ENCODE measurements at regions of chr17 and their contacts with region 1.

Region 1: DNA sequence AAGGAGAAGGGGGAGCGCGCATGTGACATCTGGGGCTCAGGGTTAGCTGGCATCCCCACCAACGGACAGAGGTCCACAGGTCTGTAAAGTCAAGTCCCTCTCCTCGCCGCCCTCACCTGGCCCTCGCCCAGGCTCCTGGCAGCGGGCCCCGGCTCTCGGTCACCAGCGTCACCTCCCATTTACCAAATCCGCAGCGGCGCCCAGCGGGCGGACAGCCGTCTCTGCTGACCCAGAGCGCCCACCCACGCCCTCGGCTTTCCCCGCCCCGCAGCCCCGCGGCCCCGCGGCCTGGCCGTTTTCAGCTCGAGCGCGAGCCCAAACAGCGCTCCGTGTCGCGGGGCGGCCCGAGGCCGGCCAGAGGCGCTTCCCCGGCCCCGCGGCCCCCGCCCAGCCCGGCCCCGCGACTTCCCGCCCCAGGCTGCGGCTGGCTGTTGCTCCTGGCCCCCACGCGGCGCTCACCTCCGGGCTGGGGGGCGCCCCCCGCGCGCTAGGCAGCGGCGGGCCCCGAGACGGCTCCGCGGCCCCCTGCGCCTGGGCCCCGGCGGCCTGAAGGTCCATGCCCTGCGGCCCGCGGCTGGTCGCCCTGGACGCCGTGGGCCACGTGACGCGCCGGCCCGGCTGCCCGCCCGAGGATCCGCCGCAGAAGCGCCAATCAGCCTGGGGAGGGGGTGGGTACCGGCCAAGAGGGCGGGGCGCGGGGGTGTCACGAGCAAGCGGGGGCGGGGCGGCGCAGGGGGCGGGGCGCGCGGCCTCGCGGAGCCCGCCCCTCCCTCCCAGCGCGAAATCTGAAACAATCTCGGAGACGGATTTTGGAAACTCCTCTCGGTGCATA is at the start of gene COPRS:
- DNase-seq: peak; percentile 19
- H3K4me3 ChIP-seq: peak within 1 kb of the TSS; percentile 65 to 78 (median 66)
- H3K27ac ChIP-seq: peak within 1 kb of the TSS; percentile 48
- H3K4me1 ChIP-seq: peaks cover 13% of the 10 kb centered on the region
- H3K27me3 ChIP-seq: no peaks in the 10 kb centered on the region
- CTCF ChIP-seq: peak in 2 of 3 experiments; percentile 10 to 23
- polyA plus RNA-seq, gene COPRS: 19.2 to 41.3 TPM (median 30.3 TPM) in 3 replicates

Region 2: DNA sequence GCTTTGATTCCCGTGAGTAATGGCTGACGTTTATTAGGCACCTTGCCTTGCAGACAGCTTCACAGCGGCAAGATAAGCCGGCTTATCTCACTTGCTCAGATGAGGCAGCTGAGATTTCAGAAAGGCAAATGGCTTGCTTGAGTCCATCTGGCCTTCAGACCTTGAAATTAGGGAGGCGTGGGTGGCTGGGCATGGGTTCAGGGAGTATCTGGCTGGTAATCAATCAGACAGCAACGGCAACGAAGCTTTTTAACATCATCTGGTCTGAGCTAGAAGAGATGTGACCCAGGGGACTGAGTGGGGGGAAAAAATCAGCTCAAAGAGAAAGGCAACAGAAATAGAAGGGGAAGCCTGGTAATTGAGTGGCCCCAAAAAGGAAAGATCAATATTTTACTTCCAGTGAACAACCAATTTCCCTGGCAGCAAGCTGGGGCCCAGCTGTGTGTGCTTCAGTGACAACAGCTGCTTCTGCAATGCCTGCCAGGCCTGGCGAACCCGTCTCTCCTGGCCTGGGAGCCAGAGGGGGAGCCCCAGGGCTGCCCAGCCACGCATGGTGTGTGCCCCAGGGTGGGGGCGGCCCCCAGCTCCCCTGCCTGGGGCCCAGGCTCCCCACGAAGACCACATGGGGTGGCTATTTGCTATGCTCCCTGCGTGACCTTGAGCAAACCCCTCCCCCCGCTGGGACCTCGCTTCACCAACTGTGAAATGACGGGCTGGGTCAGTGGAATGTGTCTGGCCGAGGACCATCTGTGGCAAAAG is 433.4 kb before region 1 on chr17:
- dilution Hi-C with region 1: loop called (anchors 25 kb)
- DNase-seq: no peak
- H3K4me3 ChIP-seq: no peak overlapping the region
- H3K27ac ChIP-seq: no peak overlapping the region
- H3K4me1 ChIP-seq: no peaks in the 10 kb centered on the region
- H3K27me3 ChIP-seq: no peaks in the 10 kb centered on the region
- CTCF ChIP-seq: no peak

Region 3: DNA sequence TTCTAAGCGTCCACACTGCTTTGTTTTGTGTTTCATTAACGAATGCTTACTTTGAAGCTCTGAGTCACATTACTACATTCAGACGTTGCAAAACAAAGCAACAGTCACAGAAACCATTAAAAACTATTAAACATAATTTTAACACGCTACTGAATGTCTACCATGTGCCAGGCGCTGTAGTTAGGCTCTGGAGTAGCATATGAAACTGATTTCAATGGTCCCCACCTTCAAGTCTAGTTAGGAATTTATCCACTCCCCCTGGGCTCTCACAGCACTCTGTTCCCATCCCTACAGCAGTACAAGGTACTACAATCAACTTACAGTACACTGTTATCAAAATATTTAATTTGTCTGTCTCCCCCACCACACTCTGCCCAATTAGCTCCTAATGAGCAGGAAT is 42.0 kb after region 1 on chr17:
- dilution Hi-C with region 1: no loop called
- DNase-seq: no peak
- H3K4me3 ChIP-seq: peak overlapping the region; percentile 92 to 98 (median 96)
- H3K27ac ChIP-seq: peak overlapping the region; percentile 89
- H3K4me1 ChIP-seq: peaks cover 4% of the 10 kb centered on the region
- H3K27me3 ChIP-seq: no peaks in the 10 kb centered on the region
- CTCF ChIP-seq: no peak

Measured in keratinocyte (primary cell).